HEK293 (cell line): ENCODE measurements at regions of chr17 and their contacts with region 1.

Region 1: DNA sequence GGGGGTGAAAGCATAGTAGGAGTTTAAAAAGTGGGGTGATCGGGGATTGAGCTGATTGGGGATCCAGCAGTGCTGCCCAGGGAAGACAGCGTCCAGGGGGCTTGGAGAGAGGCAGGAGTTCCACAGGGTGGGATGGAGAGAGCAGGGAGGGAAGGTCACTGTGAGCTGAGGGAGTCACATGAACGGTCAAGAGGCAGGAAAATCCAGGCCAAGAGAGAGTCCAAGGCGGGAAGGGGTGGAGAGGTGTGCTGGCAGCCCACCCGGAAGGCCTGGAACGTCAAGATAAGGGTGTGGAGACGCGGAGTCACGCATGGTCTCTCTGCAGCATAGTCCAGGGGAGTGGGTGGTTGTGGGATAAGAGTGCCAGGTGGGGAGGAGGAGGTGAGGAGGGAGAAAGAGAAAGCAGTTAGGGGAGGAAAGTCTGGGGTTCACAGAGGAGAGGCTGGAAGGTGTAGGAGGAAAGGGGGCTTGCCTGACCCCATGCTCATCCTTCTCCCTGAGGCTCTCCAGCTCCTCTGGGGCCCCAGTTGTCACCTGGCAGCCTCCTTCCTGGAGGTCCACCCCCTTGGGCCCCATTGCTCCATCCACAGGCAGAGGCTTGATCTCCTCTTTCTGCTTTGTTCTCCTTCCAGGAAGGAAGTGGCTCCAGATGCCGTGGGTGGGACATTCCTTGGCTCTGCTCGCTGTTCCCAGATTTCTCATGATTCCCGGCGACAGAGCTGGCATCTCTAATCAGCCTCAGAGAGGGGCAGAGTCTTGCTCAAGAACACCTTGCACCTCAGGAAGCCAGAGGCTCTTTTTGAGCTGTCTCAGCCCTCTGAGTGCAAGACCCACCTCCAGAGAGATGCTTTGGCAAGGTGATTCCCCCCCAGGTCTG is 28.7 kb downstream of the CCR7 start:
- H3K4me3 ChIP-seq: no peak overlapping the region
- H3K27ac ChIP-seq: no peak overlapping the region
- H3K4me1 ChIP-seq: no peaks in the 10 kb centered on the region
- CTCF ChIP-seq: no peak

Region 2: DNA sequence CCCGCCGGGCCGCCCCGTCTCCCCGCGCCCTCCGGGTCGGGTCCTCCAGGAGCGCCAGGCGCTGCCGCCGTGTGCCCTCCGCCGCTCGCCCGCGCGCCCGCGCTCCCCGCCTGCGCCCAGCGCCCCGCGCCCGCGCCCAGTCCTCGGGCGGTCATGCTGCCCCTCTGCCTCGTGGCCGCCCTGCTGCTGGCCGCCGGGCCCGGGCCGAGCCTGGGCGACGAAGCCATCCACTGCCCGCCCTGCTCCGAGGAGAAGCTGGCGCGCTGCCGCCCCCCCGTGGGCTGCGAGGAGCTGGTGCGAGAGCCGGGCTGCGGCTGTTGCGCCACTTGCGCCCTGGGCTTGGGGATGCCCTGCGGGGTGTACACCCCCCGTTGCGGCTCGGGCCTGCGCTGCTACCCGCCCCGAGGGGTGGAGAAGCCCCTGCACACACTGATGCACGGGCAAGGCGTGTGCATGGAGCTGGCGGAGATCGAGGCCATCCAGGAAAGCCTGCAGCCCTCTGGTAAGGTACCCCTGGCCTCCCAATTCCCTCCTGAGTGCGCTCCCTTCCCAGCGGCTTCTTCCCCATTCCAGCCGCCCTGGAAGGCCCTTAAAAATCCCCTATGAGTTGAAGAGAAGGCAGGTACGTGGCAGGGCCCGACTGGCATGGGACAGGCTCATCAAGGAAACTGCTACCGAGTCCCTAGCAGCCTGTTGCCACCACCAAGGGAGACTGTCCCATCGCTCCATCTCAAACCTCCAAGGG is 92.8 kb before region 1 on chr17:
- CTCF ChIA-PET with region 1: interaction called, 194 read pairs
- POLR2A ChIA-PET with region 1: interaction called, 4 read pairs
- H3K4me3 ChIP-seq: peak overlapping the region; percentile 16
- H3K27ac ChIP-seq: peak overlapping the region; percentile 46; the same call in 1 of the 2 replicates
- H3K4me1 ChIP-seq: no peaks in the 10 kb centered on the region; the same call in 1 of the 2 replicates
- CTCF ChIP-seq: peak; percentile 76

Region 3: GRCh38 chr17:40499551-40500174 is 36.9 kb before region 1 on chr17:
- CTCF ChIA-PET with region 1: interaction called, 31 read pairs
- POLR2A ChIA-PET with region 1: interaction called, 3 read pairs
- H3K4me3 ChIP-seq: no peak overlapping the region
- H3K27ac ChIP-seq: no peak overlapping the region
- H3K4me1 ChIP-seq: no peaks in the 10 kb centered on the region; the same call in 1 of the 2 replicates
- CTCF ChIP-seq: no peak